ENCODE measurements at regions of chr9 and their contacts with region 1.

Region 1: GRCh38 chr9:136093995-136094881 is 851 bp downstream of the NACC2 start:
- DNase-seq: peak; percentile 42 to 72 (median 46)
- H3K4me3 ChIP-seq: peak overlapping the region in 1 of 2 donors; percentile 45
- H3K4me3 Mint-ChIP-seq: peak overlapping the region; percentile 65 to 88 (median 74)
- H3K27ac ChIP-seq: peak overlapping the region; percentile 43
- H3K27ac Mint-ChIP-seq: peak overlapping the region in 5 of 7 donors; percentile 22 to 85 (median 70)
- H3K4me1 ChIP-seq: peaks cover 45% of the 10 kb centered on the region
- H3K4me1 Mint-ChIP-seq: peaks cover 6 to 43% (median 24%) of the 10 kb centered on the region in 4 donors
- H3K27me3 ChIP-seq: no peaks in the 10 kb centered on the region
- H3K27me3 Mint-ChIP-seq: no peaks in the 10 kb centered on the region

Region 2: DNA sequence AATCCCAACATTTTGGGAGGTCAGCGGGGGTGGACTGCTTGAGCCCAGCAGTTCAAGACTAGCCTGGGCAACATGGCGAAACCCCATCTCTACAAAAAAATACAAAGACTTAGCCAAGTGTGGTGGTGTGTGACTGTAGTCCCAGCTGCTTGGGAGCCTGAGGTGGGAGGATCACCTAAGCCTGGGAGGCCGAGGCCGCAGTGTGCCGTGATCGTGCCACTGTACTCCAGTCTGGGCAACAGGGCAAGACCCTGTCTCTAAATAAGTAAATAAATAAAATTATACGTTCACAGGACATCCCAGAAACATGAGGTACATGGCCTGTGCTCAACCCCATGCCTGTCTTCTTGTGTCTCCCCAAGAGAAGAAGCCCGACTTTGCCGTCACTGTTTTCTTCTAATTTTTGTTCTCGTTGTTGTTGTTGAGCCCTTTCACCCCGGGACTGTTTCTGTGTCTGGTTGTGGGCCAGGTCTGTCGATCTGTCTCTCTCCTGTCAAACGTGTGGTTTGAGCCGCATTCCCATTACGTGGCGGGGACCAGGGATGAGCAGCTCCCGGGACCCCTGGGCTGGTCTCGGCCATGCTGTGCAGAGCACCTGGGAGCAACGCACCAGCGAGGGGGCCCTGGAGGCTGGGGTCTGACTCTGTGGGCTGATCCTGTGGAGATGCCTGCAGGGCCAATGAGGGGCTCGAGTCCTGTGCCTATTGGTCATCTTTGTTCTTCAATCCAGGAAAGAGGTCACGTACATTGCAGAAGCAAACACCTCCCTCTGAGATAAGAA is 31.4 kb before region 1 on chr9:
- CTCF ChIA-PET with region 1: no interaction called
- POLR2A ChIA-PET with region 1: no interaction called
- intact Hi-C with region 1: no loop called
- DNase-seq: no peak
- H3K4me3 ChIP-seq: no peak overlapping the region
- H3K4me3 Mint-ChIP-seq: no peak overlapping the region
- H3K27ac ChIP-seq: no peak overlapping the region
- H3K27ac Mint-ChIP-seq: no peak overlapping the region
- H3K4me1 ChIP-seq: no peaks in the 10 kb centered on the region
- H3K4me1 Mint-ChIP-seq: peaks cover under 1 to 13% (median 4%) of the 10 kb centered on the region in 4 donors
- H3K27me3 ChIP-seq: no peaks in the 10 kb centered on the region
- H3K27me3 Mint-ChIP-seq: no peaks in the 10 kb centered on the region

Region 3: GRCh38 chr9:136109351-136110081 is 15.3 kb after region 1 on chr9:
- CTCF ChIA-PET with region 1: interaction called, 6 read pairs
- POLR2A ChIA-PET with region 1: interaction called, 155 read pairs
- intact Hi-C with region 1: loop called (anchors 1 kb)
- DNase-seq: peak; percentile 91 to 94 (median 91)
- H3K4me3 ChIP-seq: peak overlapping the region; percentile 9 to 77
- H3K4me3 Mint-ChIP-seq: peak overlapping the region; percentile 81 to 90 (median 86)
- H3K27ac ChIP-seq: peak overlapping the region; percentile 69
- H3K27ac Mint-ChIP-seq: peak overlapping the region; percentile 86 to 95 (median 89)
- H3K4me1 ChIP-seq: peaks cover 87% of the 10 kb centered on the region
- H3K4me1 Mint-ChIP-seq: peaks cover 19 to 85% (median 56%) of the 10 kb centered on the region in 4 donors
- H3K27me3 ChIP-seq: no peaks in the 10 kb centered on the region
- H3K27me3 Mint-ChIP-seq: no peaks in the 10 kb centered on the region